ENCODE measurements at regions of chr14 and their contacts with region 1.

Region 1: GRCh38 chr14:99480917-99481744 is at the start of gene CCNK:
- DNase-seq: peak; percentile 97 to 100 (median 100)
- ATAC-seq: peak; percentile 85 to 86
- H3K4me3 Mint-ChIP-seq: peak within 1 kb of the TSS; percentile 92 to 99 (median 98)
- H3K27ac Mint-ChIP-seq: peak within 1 kb of the TSS; percentile 97 to 100 (median 99)
- H3K4me1 Mint-ChIP-seq: peaks cover 36 to 78% (median 70%) of the 10 kb centered on the region in 4 donors
- H3K27me3 Mint-ChIP-seq: no peaks in the 10 kb centered on the region
- polyA plus RNA-seq, gene CCNK: 13.4 to 19.8 (median 14.0) TPM

Region 2: DNA sequence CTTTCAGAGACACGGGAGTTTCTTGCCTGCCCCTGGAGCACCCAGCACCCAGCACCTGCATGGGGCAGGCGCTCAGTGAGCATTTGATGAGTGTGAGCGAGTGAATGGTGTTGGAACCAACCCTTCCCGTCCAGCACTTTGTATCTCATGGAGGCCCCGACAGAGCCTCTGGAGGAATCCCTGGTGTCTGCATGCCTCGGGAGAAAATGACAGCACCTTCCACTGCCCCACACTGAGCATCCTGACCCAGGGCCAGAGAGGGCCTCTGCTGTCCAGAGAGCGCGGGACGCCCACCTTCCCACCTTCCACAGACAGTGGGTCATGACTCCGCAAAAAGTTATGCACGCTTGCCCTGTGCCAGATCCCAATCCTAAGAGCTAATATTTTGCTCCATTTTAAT is 106.2 kb before region 1 on chr14:
- POLR2A ChIA-PET with region 1: no interaction called
- DNase-seq: no peak
- ATAC-seq: no peak
- H3K4me3 Mint-ChIP-seq: no peak overlapping the region
- H3K27ac Mint-ChIP-seq: peak overlapping the region in 1 of 10 donors; percentile 53
- H3K4me1 Mint-ChIP-seq: peaks cover 0 to 2% (median under 1%) of the 10 kb centered on the region in 4 donors
- H3K27me3 Mint-ChIP-seq: peaks cover 14 to 44% (median 19%) of the 10 kb centered on the region in 5 donors

Region 3: GRCh38 chr14:99683619-99684355 is 202.7 kb after region 1 on chr14 and contains the start of gene CYP46A1:
- POLR2A ChIA-PET with region 1: interaction called, 13 read pairs
- DNase-seq: peak; percentile 94 to 100 (median 99)
- ATAC-seq: peak; percentile 86 to 92
- H3K4me3 Mint-ChIP-seq: peak within 1 kb of the TSS; percentile 85 to 96 (median 93)
- H3K27ac Mint-ChIP-seq: peak within 1 kb of the TSS; percentile 55 to 96 (median 91)
- H3K4me1 Mint-ChIP-seq: peaks cover 8 to 28% (median 20%) of the 10 kb centered on the region in 4 donors
- H3K27me3 Mint-ChIP-seq: peaks cover 2 to 22% (median 9%) of the 10 kb centered on the region in 5 donors
- polyA plus RNA-seq, gene CYP46A1: 0.02 TPM in 1 of 3 donors, not detected in the others

Region 4: GRCh38 chr14:99718031-99718810 is 237.1 kb after region 1 on chr14:
- POLR2A ChIA-PET with region 1: no interaction called
- DNase-seq: peak in 1 of 10 donors; percentile 14
- ATAC-seq: no peak
- H3K4me3 Mint-ChIP-seq: no peak overlapping the region
- H3K27ac Mint-ChIP-seq: no peak overlapping the region
- H3K4me1 Mint-ChIP-seq: peaks cover 0 to 2% (median 0%) of the 10 kb centered on the region in 4 donors
- H3K27me3 Mint-ChIP-seq: peaks cover 0 to 11% (median 3%) of the 10 kb centered on the region in 5 donors

Measured in naive thymus-derived CD8-positive, alpha-beta T cell (primary cell).